BJ (cell line): ENCODE measurements at regions of chr12 and their contacts with region 1.

Region 1: DNA sequence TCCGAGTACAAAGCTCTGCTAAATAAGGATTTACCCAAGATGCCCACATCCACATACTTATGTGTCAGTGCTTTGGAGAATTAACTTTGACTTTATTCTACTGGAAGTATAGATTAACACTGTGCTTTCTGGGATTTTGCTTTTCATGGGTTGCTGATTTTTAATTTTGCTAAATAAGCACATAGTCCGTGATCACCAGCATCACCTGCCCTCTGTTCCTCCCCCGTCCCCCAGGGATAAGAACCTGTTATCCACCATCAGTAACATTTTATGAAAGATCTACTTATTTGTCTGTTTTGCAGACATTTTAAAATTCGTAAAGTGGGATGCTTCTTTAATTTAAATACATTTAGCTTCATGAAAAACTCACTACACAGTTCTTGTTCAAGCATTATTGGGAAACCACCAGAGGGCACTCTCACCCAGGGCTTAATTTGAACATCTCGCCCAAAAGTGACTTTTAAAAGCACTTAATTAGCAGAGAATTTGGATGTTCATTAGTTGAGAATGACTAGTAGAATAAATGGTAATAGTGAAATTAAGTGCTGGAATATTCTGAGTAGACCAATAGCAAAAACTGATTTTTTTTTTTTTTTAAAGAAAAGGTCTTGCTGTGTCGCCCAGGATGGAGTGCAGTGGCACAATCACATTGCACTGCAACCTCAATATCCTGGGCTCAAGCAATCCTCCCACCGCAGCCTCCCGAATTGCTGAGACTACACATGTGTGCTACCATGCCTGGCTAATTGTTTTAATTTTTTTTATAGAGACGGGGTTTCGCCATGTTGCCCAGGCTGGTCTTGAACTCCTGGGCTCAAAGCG is 35.7 kb downstream of the MRPL42 start:
- DNase-seq: no peak
- H3K4me3 ChIP-seq: no peak overlapping the region
- H3K27me3 ChIP-seq: no peaks in the 10 kb centered on the region
- CTCF ChIP-seq: peak; percentile 80

Region 2: DNA sequence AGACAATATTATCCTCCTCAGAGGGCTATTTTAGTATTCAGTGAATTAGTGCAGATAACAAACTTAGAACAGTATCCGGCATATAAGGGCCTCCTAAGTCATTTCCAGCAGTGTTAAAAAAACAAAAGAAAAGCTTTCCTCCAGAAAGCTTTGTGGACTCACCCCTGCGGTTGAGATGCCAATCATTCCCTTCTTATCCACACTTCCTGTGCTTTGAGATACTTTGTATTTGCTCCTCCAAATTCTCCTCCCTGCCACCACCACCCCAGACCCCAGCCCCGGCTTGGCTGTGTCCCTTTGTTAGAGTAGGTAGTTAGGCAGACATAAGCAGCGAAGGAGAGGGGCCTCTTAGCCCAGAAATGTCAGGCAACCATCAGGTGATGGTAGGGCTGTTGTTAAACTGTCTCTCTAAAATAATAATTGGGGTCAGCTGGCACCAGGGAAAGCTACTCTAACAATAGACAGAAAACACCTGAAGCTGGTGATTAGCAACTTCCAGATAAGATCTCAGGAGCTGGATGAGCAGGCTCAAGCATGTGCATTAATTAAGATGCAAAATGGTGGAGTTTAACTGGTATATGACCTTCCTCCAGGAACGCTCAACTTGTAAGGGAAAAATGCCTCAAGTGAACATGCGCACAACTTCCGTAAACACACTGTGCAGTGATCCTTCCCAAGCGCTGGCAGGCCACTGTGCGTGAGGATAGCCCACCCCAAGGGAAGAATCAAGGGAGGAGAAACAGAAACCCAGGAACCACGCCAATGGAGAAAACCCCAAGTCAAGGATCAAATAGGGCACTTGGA is 421.8 kb before region 1 on chr12:
- CTCF ChIA-PET with region 1: no interaction called
- POLR2A ChIA-PET with region 1: no interaction called
- DNase-seq: no peak
- H3K4me3 ChIP-seq: no peak overlapping the region
- H3K27me3 ChIP-seq: no peaks in the 10 kb centered on the region; the same call in 1 of the 2 replicates
- CTCF ChIP-seq: no peak

Region 3: DNA sequence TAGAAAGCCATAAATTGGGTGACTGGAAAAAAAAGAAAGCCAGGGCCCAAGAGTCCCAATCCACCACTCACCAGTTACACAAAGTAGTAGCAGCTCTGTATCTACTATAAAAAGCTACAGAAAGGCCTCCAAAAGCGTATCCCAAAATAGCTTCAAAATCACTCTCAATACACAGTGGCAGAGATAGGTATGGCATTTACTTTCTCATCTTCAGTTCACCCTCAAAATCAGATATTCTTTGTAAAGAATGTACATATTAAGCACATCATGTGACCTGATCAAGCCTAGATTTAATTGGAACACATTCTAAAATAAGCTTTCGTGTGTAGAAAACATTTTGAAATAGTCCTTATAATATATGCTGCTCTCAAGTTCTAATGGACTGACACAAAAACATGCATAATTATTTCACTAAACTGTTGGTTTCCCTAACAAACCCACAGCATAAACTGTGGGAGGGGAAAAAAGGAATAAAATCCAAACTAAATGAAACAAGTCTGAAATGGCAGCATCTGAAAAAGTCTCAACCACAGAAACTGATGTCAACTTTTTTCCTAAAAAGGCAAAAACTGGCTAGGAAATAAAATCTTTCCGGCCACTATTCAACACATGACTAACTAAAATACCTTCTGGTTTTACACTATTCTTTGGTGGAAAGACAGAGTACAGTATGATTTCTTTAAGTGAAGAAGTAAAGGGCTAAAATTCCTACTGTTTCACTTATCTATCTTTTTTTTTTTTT is 87.1 kb before region 1 on chr12:
- CTCF ChIA-PET with region 1: no interaction called
- POLR2A ChIA-PET with region 1: no interaction called
- DNase-seq: peak; percentile 29
- H3K4me3 ChIP-seq: no peak overlapping the region
- H3K27me3 ChIP-seq: no peaks in the 10 kb centered on the region
- CTCF ChIP-seq: no peak

Region 4: DNA sequence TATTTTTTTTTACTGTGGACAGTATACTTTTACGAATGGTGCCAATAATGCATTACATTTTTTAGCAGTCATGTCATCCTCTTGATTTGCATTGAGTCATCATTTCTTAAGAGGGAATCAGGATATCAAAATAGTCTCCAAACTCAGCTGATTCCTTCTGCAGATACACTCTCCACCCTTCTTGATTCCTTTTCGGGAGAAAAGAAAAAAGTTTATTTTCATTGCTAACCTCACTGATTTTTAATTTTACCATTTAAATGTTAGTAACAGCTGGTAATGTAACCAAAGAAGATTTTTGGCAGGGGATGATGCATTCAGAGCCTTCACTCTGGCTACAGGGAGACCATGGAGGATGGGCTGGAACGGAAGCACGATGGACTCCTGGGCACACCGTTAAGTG is 11.8 kb after region 1 on chr12:
- CTCF ChIA-PET with region 1: interaction called, 11 read pairs
- POLR2A ChIA-PET with region 1: no interaction called
- DNase-seq: peak; percentile 13
- H3K4me3 ChIP-seq: no peak overlapping the region
- H3K27me3 ChIP-seq: no peaks in the 10 kb centered on the region
- CTCF ChIP-seq: no peak

Region 5: GRCh38 chr12:93563807-93564538 is 61.0 kb after region 1 on chr12:
- CTCF ChIA-PET with region 1: interaction called, 16 read pairs
- POLR2A ChIA-PET with region 1: no interaction called
- DNase-seq: no peak
- H3K4me3 ChIP-seq: no peak overlapping the region
- H3K27me3 ChIP-seq: no peaks in the 10 kb centered on the region
- CTCF ChIP-seq: peak; percentile 37; the same call in 1 of the 2 replicates

Region 6: DNA sequence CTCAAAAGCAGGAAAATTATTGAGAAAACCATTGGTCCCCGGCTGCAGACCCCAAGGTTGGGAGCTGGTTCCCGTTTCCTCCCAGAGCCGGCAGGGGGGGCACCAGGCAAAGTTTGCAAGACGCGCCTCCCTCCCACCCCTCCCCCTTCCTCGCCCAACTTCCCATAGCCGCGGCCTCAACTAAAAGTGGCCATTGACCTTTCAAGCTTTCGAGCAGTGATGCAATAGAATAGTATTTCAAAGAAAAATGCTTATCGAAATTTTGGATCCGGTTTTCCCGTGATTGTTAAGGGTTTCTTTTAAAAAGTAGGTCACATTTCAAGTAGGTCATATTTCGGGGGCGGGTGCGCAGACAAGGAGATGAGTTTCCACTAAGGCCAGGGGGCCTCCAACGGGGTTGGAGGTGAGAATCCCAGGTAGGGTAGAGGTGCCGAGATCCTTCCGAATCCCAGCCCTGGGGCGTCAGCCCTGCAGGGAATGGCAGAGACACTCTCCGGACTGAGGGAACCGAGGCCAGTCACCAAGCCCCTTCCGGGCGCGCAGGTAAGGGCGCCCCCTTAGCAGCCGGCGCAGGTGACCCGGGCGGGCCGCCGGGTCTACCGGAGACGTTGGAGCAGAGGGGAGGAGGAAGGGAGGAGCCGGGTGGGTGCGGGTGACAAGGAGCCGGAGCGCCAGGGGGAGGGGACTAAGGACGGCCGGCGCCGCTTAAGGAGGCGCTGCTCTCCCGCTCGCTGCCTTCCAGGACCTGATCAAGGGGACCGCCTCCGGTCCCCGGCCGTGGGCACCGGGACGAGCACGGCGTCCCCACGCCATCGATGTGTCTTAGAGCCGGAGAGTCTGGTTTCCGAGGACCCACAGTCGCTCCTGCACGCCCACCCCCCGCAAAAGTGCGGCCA is 66.9 kb after region 1 on chr12:
- CTCF ChIA-PET with region 1: interaction called, 16 read pairs
- POLR2A ChIA-PET with region 1: no interaction called
- DNase-seq: no peak
- H3K4me3 ChIP-seq: peak overlapping the region; percentile 93
- H3K27me3 ChIP-seq: no peaks in the 10 kb centered on the region
- CTCF ChIP-seq: peak; percentile 93

Region 7: DNA sequence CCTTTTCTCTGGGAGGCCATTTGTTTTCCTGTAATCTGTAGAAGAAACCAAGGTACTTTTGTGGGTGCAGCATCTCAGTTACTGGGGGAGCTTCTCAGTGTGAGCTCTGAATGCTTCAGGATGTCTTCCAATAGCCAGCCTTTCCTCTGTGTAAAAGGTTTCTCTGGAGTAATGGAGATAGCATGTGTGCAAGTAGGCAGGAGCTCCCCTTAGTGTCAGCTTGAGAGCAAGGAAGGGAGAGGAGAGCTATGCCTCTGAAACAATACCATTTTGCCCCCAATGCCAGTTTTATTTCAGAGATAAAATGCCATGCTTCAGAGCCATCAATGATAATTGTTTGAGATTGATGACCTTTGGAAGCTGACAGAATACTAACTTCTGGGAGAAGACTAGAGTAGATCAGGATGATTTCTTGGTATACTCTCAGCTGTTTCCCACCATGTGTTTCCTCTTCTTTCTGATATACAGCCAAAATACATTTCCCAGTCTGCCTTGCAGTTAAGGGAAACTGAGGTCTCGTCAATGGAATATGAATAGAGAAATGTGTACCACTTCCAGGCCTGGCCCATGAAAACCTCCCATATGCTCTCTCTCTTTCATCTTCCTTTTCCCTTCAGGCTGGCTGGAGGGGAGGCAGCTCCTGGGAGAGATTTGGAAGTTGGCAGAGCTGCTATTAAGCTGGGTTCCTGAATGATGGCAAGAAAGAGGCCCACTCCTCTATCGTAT is 299.8 kb after region 1 on chr12:
- CTCF ChIA-PET with region 1: interaction called, 10 read pairs
- POLR2A ChIA-PET with region 1: interaction called, 6 read pairs
- DNase-seq: no peak
- H3K4me3 ChIP-seq: no peak overlapping the region
- H3K27me3 ChIP-seq: no peaks in the 10 kb centered on the region
- CTCF ChIP-seq: peak; percentile 53

Region 8: DNA sequence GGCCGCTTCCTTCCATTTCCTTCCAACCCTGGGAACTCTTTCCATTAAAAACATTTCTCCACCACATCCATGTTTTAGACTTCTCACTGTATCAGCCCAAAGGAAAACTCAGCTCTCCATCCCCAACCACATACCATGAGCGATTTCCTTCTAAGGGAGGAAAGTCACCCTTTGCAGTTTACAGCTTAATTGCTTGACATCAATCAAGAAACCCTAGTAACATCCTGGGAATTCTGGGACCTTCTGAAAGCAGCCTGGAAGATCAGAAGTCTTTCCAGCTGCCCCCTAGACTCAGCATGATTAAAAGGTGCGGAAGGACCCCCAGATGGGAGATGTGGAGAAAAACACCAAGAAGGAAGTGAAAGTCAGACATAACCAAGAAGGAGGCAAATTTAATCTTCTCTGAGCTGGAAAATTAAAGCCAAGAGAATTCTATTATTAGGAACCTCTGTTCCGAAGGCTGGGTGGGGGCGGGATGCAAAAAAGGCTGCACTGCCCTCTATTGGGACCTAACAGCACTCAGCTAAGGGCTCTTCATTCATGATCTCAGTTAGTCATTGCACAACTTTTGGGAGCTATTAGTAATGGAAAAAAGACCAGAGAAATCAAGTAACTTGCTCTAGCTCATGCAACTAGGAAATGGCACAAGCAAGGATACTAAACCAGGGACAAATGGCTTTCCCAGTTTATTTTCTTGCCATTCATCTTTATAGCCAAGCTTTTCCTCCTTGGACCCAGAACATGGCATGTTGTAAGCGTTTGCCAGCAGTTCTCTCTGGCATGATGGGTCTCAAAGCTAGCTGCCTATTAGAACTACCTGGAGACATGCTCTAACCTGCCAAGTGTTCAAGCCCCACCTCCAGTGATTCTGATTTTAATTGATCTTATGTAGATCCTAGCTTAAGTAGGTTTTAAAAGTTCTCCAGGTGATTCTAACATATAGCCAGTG is 572.2 kb after region 1 on chr12:
- CTCF ChIA-PET with region 1: interaction called, 11 read pairs
- POLR2A ChIA-PET with region 1: no interaction called
- DNase-seq: peak; percentile 63
- H3K4me3 ChIP-seq: no peak overlapping the region
- H3K27me3 ChIP-seq: no peaks in the 10 kb centered on the region
- CTCF ChIP-seq: peak; percentile 87

Region 9: GRCh38 chr12:94561943-94562411 is 1059.0 kb after region 1 on chr12:
- CTCF ChIA-PET with region 1: no interaction called
- POLR2A ChIA-PET with region 1: no interaction called
- DNase-seq: no peak
- H3K4me3 ChIP-seq: no peak overlapping the region
- H3K27me3 ChIP-seq: peaks cover 4% of the 10 kb centered on the region
- CTCF ChIP-seq: no peak